ENCODE measurements at regions of chr20 and their contacts with region 1.

Region 1: GRCh38 chr20:57061058-57061900 is 205.2 kb downstream of the BMP7 start:
- DNase-seq: peak; percentile 47 to 67
- ATAC-seq: peak; percentile 64 to 94; a peak in 3 of 6 replicates
- H3K4me3 ChIP-seq: no peak overlapping the region
- H3K27ac ChIP-seq: no peak overlapping the region
- H3K4me1 ChIP-seq: 0 out of 3 replicates have a peak, but pooled peaks cover 4% of the 10 kb centered on the region
- CTCF ChIP-seq: peak; percentile 51
- EP300 ChIP-seq: no peak
- POLR2A ChIP-seq: no peak
- RAD21 ChIP-seq: peak; percentile 69 to 86

Region 2: GRCh38 chr20:56909918-56910714 is 151.2 kb before region 1 on chr20:
- CTCF ChIA-PET with region 1: no interaction called
- POLR2A ChIA-PET with region 1: no interaction called
- DNase-seq: no peak
- ATAC-seq: no peak
- H3K4me3 ChIP-seq: no peak overlapping the region
- H3K27ac ChIP-seq: no peak overlapping the region
- H3K4me1 ChIP-seq: no peaks in the 10 kb centered on the region
- CTCF ChIP-seq: no peak
- EP300 ChIP-seq: no peak
- POLR2A ChIP-seq: no peak
- RAD21 ChIP-seq: no peak

Region 3: GRCh38 chr20:57048027-57048869 is 13.0 kb before region 1 on chr20:
- CTCF ChIA-PET with region 1: interaction called, 26 read pairs
- POLR2A ChIA-PET with region 1: no interaction called
- DNase-seq: peak; percentile 81 to 88
- ATAC-seq: peak; percentile 79 to 94
- H3K4me3 ChIP-seq: peak overlapping the region; percentile 27; the same call in 2 of the 3 replicates
- H3K27ac ChIP-seq: peak overlapping the region; percentile 61 to 74
- H3K4me1 ChIP-seq: peaks cover 22% of the 10 kb centered on the region
- CTCF ChIP-seq: peak; percentile 65
- EP300 ChIP-seq: no peak
- POLR2A ChIP-seq: no peak
- RAD21 ChIP-seq: peak; percentile 62 to 64

Region 4: DNA sequence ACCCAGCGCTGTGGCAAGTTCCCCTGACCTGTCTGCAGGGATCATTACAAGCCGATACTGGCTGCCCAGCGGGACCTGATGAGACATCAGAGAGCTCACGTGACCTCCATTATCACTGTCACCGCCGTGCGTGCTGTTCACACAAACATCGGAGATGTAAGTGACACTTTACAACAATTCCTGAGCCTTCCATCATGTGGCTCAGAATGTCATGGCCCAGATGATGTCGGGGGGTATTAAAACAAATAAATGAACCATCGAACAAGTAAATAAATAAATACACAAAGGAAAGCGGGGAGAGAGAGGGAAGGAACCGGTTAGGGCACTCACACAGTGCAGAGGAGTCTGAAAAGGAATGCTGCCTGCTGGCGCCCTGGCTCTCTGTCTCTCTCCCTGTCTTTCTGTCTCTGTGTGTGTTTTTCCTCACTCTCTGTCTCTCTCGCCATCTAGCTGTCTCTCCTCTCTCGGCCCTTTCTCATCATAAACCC is 10.0 kb after region 1 on chr20:
- CTCF ChIA-PET with region 1: interaction called, 13 read pairs
- POLR2A ChIA-PET with region 1: no interaction called
- DNase-seq: no peak
- ATAC-seq: peak in 1 of 2 experiments; percentile 21; a peak in 1 of 6 replicates
- H3K4me3 ChIP-seq: no peak overlapping the region
- H3K27ac ChIP-seq: no peak overlapping the region
- H3K4me1 ChIP-seq: peaks cover 6% of the 10 kb centered on the region
- CTCF ChIP-seq: no peak
- EP300 ChIP-seq: no peak
- POLR2A ChIP-seq: no peak
- RAD21 ChIP-seq: no peak

Region 5: GRCh38 chr20:57080788-57081187 is 19.5 kb after region 1 on chr20:
- CTCF ChIA-PET with region 1: interaction called, 10 read pairs
- POLR2A ChIA-PET with region 1: no interaction called
- DNase-seq: peak in 1 of 2 experiments; percentile 33
- ATAC-seq: peak in 1 of 2 experiments; percentile 58; a peak in 3 of 6 replicates
- H3K4me3 ChIP-seq: no peak overlapping the region
- H3K27ac ChIP-seq: no peak overlapping the region
- H3K4me1 ChIP-seq: no peaks in the 10 kb centered on the region
- CTCF ChIP-seq: no peak
- EP300 ChIP-seq: no peak
- POLR2A ChIP-seq: no peak
- RAD21 ChIP-seq: peak; percentile 22 to 31; a peak in 2 of 5 replicates

Region 6: DNA sequence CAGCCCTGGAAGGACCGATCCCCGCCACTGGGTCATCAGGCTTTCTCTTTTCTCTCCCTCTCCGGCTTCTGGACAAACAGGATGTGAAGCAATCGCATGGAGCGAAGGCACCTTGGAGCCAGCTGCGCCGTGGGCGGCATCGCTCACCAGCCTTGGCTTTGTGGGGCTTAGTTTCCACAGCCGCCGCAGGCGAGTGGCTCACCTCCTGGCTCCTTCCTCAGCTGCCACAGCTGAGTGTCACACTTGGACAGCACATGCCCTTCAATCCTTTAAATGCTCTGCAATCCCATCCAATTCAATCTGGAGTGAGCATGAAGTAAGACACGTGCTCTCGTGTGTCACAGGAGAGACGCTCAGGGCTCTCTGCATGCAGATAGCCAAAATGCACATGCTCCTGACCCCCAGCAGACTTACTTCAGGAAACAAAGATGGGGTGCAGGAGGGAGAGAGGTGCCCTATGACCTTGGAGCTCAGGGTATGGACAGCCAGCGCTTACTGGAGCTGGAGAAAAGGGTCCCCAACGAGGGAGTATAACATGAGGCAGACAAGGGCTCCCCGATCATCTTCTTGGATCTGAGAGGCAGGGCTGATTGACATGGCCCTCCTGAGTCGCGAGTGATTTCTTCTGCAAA is 134.3 kb after region 1 on chr20:
- CTCF ChIA-PET with region 1: no interaction called
- POLR2A ChIA-PET with region 1: no interaction called
- DNase-seq: no peak
- ATAC-seq: no peak
- H3K4me3 ChIP-seq: no peak overlapping the region
- H3K27ac ChIP-seq: no peak overlapping the region
- H3K4me1 ChIP-seq: peaks cover 7% of the 10 kb centered on the region; the same call in 1 of the 3 replicates
- CTCF ChIP-seq: no peak
- EP300 ChIP-seq: no peak
- POLR2A ChIP-seq: no peak
- RAD21 ChIP-seq: no peak

Measured in A549 (cell line).